ENCODE measurements at regions of chr3 and their contacts with region 1.

Region 1: GRCh38 chr3:47420511-47421484 is 40.0 kb downstream of the PTPN23 start:
- DNase-seq: peak; percentile 95
- ATAC-seq: peak; percentile 97
- H3K4me3 Mint-ChIP-seq: peak overlapping the region; percentile 17
- H3K27ac Mint-ChIP-seq: peak overlapping the region; percentile 99
- H3K4me1 Mint-ChIP-seq: peaks cover 10% of the 10 kb centered on the region
- H3K27me3 Mint-ChIP-seq: no peaks in the 10 kb centered on the region

Region 2: DNA sequence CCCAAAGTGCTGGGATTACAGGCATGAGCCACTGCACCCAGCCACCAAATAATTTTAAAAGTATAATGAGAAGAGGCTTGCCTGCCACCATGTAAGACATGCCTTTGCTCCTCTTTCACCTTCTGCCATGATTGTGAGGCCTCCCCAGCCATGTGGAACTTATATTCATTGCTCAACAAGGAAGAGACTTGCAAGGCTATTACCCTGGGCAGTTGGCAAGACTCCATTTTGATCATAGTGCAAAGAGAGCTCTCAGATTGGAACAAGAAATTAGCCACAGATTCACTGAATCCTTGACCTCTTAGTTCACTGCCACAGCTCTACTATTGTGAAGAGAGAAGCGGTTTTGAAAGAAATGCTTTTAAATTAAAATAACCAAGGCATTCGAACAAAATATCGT is 48.8 kb after region 1 on chr3:
- CTCF ChIA-PET with region 1: interaction called, 83 read pairs
- POLR2A ChIA-PET with region 1: no interaction called
- intact Hi-C with region 1: loop called in 1 of 2 experiments (anchors 2 kb)
- DNase-seq: no peak
- ATAC-seq: no peak
- H3K4me3 Mint-ChIP-seq: no peak overlapping the region
- H3K27ac Mint-ChIP-seq: no peak overlapping the region
- H3K4me1 Mint-ChIP-seq: peaks cover 33% of the 10 kb centered on the region
- H3K27me3 Mint-ChIP-seq: no peaks in the 10 kb centered on the region

Region 3: GRCh38 chr3:47475570-47476329 is 55.0 kb after region 1 on chr3 and contains the start of gene SCAP:
- CTCF ChIA-PET with region 1: interaction called, 83 read pairs
- POLR2A ChIA-PET with region 1: interaction called, 7 read pairs
- intact Hi-C with region 1: loop called (anchors 1 kb)
- DNase-seq: peak; percentile 98
- ATAC-seq: peak; percentile 95
- H3K4me3 Mint-ChIP-seq: peak within 1 kb of the TSS; percentile 89
- H3K27ac Mint-ChIP-seq: peak within 1 kb of the TSS; percentile 84
- H3K4me1 Mint-ChIP-seq: peaks cover 33% of the 10 kb centered on the region
- H3K27me3 Mint-ChIP-seq: no peaks in the 10 kb centered on the region
- total RNA-seq, gene SCAP: 44.5 to 51.2 TPM

Region 4: DNA sequence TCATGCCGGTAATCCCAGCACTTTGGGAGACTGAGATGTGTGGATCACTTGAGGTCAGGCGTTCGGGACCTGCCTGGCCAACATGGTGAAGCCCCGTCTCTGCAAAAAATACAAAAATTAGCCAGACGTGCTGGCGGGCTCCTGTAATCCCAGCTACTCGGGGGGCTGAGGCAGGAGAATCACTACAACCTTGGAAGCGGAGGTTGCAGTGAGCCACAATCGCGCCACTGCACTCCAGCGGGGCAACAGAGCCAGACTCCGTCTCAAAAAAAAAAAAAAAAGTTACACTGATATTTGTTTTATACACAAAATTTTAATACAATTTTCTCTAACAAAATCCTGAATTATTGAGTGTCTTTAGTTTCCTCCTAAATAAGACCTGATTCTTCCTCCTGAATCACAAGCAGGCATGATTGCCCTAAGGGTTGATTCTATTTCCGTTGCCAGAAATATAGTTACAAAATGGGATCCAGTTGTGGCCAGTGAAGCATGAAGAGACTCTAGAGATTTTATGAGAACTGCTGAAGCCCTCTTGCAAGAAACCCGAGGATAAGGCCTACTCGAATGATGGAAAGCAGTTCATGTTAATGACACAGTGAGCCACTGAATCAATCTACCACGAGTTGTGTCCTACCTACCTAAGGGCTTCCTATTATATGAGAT is 370.5 kb after region 1 on chr3:
- CTCF ChIA-PET with region 1: interaction called, 4 read pairs
- POLR2A ChIA-PET with region 1: no interaction called
- intact Hi-C with region 1: loop called in 1 of 2 experiments (anchors 1 kb)
- DNase-seq: no peak
- ATAC-seq: no peak
- H3K4me3 Mint-ChIP-seq: no peak overlapping the region
- H3K27ac Mint-ChIP-seq: no peak overlapping the region
- H3K4me1 Mint-ChIP-seq: peaks cover 2% of the 10 kb centered on the region
- H3K27me3 Mint-ChIP-seq: no peaks in the 10 kb centered on the region

Region 5: DNA sequence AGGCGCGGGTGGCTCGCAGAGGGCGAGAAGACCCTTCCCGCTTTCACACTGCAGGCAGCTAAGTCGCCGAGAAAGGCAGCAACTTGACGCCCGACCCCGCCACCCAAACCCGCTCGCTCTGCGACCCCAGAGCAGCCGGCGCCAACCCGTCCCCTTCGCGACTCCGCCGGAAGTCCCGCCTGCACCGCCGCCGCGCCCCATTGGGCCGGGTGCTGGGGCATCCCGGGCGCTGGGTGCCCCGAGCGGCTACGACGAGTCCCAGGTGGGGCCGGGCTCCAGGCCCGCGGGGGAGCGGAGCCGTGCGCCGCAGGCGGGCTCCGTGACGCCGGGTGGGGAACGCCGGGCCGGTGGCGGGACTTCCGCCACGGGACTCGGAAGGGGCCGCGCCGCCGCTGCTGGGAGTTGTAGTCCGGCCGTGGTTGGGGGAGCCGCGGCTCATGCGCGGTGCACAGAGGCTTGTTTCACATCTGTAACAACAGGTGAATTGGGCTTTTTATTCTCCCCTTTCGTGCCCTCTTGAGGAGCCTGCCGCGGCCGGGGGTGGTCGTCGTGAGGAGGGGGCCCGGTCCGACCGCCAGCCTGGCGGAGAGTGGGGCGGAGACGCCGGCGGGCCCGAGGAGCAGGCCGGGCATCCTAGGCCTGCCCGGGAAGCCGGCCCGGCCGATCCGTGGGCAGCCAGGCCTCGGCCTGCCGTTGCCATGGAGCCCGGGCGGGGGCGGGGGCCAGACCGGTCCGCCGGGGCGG is 382.1 kb after region 1 on chr3 and contains the start of gene DHX30:
- CTCF ChIA-PET with region 1: interaction called, 3 read pairs
- POLR2A ChIA-PET with region 1: no interaction called
- intact Hi-C with region 1: loop called in 1 of 2 experiments (anchors 1 kb)
- DNase-seq: peak; percentile 93
- ATAC-seq: peak; percentile 92
- H3K4me3 Mint-ChIP-seq: peak within 1 kb of the TSS; percentile 96
- H3K27ac Mint-ChIP-seq: peak within 1 kb of the TSS; percentile 98
- H3K4me1 Mint-ChIP-seq: peaks cover 24% of the 10 kb centered on the region
- H3K27me3 Mint-ChIP-seq: no peaks in the 10 kb centered on the region
- total RNA-seq, gene DHX30: 81.6 to 82.3 TPM